B cell (primary cell): ENCODE measurements at regions of chr1 and their contacts with region 1.

Region 1: DNA sequence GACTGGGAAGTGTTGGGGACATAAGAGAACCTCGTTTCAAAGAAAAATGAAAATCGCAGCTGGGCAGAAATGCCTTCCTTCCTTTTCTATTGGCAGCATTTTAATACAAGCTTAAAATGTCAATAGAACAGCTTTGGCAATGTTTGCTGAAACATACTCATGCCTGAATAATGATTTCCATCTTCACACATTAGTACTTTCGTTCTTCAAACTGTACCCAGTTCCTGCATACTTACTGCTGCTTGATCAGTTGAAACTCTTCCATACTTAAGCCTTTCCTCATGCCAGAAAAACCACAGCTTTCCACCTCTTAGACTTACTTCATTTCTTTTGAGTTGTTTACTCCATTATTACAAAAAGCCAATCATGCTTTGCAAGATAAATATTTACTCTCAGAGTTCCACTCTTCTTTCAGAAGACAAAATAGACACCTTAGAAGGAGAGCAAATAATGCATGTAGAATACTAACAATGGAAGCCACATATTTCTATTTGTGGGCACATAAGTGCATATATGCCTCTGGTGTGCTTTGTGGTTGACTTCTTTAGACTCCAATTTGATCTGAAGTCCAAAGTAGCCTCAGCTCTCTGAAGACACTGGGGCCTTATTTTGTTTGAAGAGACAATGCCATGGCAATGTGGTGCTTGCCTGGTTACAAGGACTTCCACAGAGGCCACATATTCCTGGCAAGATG is 22.7 kb upstream of the CD55 start:
- DNase-seq: peak; percentile 22
- ATAC-seq: peak; percentile 28
- H3K4me3 ChIP-seq: peak overlapping the region in 2 of 5 experiments; percentile 27 to 31
- H3K4me3 Mint-ChIP-seq: peak overlapping the region; percentile 58
- H3K27ac ChIP-seq: peak overlapping the region; percentile 14 to 78
- H3K27ac Mint-ChIP-seq: peak overlapping the region; percentile 75
- H3K4me1 ChIP-seq: peaks cover 20 to 22% of the 10 kb centered on the region in 2 donors
- H3K4me1 Mint-ChIP-seq: peaks cover 26% of the 10 kb centered on the region
- H3K27me3 ChIP-seq: no peaks in the 10 kb centered on the region
- H3K27me3 Mint-ChIP-seq: no peaks in the 10 kb centered on the region
- CTCF ChIP-seq: no peak

Region 2: DNA sequence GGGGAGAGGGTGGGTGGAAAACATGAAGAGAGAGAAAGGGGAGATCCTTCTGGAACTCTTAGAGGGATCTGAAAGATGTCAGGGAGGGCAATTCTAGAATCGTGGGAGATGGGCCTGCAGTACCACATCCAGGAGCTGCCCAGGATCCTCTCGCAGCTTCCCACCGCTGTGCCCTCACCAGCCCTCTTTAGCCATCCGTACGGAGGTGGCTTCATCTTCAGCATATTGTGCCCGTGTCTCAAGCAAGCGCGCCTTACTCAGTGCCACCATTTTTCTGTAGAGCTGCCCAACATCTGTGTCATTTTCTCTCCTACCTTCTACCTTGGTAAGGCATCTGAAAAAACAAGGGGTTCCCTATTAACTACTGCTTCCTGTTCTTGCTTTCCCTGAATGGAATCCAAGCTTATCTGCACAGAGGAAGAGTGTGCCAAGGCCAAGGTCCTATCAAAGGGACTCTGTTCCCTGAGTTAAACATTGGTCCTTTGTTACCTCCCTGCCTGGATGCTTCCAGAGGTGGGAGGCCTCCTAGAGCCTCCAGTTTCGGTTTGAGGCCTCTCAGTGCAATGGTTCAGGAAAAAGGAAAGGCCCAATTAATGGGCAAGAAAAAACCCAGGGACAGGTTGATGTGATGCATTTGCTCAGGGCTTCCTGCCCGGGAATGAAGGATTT is 289.5 kb before region 1 on chr1:
- CTCF ChIA-PET with region 1: no interaction called
- POLR2A ChIA-PET with region 1: no interaction called
- intact Hi-C with region 1: no loop called
- DNase-seq: no peak
- ATAC-seq: no peak
- H3K4me3 ChIP-seq: no peak overlapping the region
- H3K4me3 Mint-ChIP-seq: no peak overlapping the region
- H3K27ac ChIP-seq: no peak overlapping the region
- H3K27ac Mint-ChIP-seq: no peak overlapping the region
- H3K4me1 ChIP-seq: peaks cover 3 to 4% of the 10 kb centered on the region in 2 donors
- H3K4me1 Mint-ChIP-seq: peaks cover 2% of the 10 kb centered on the region
- H3K27me3 ChIP-seq: peaks cover 0 to 16% (median 9%) of the 10 kb centered on the region in 4 experiments
- H3K27me3 Mint-ChIP-seq: peaks cover 47% of the 10 kb centered on the region
- CTCF ChIP-seq: no peak

Region 3: GRCh38 chr1:207309775-207310273 is 11.0 kb after region 1 on chr1:
- CTCF ChIA-PET with region 1: interaction called, 3 read pairs
- POLR2A ChIA-PET with region 1: no interaction called
- intact Hi-C with region 1: loop called (anchors 1 kb)
- DNase-seq: peak; percentile 55
- ATAC-seq: peak; percentile 58
- H3K4me3 ChIP-seq: peak overlapping the region in 3 of 5 experiments; percentile 15 to 33 (median 25)
- H3K4me3 Mint-ChIP-seq: peak overlapping the region; percentile 74
- H3K27ac ChIP-seq: peak overlapping the region; percentile 67 to 88
- H3K27ac Mint-ChIP-seq: peak overlapping the region; percentile 83
- H3K4me1 ChIP-seq: peaks cover 18 to 23% of the 10 kb centered on the region in 2 donors
- H3K4me1 Mint-ChIP-seq: peaks cover 29% of the 10 kb centered on the region
- H3K27me3 ChIP-seq: no peaks in the 10 kb centered on the region
- H3K27me3 Mint-ChIP-seq: no peaks in the 10 kb centered on the region
- CTCF ChIP-seq: no peak

Region 4: GRCh38 chr1:207374887-207375286 is 76.1 kb after region 1 on chr1:
- CTCF ChIA-PET with region 1: no interaction called
- POLR2A ChIA-PET with region 1: no interaction called
- intact Hi-C with region 1: no loop called
- DNase-seq: no peak
- ATAC-seq: no peak
- H3K4me3 ChIP-seq: no peak overlapping the region
- H3K4me3 Mint-ChIP-seq: no peak overlapping the region
- H3K27ac ChIP-seq: no peak overlapping the region
- H3K27ac Mint-ChIP-seq: no peak overlapping the region
- H3K4me1 ChIP-seq: no peaks in the 10 kb centered on the region
- H3K4me1 Mint-ChIP-seq: peaks cover 5% of the 10 kb centered on the region
- H3K27me3 ChIP-seq: no peaks in the 10 kb centered on the region
- H3K27me3 Mint-ChIP-seq: no peaks in the 10 kb centered on the region
- CTCF ChIP-seq: no peak